ENCODE measurements at regions of chr12 and their contacts with region 1.

Region 1: DNA sequence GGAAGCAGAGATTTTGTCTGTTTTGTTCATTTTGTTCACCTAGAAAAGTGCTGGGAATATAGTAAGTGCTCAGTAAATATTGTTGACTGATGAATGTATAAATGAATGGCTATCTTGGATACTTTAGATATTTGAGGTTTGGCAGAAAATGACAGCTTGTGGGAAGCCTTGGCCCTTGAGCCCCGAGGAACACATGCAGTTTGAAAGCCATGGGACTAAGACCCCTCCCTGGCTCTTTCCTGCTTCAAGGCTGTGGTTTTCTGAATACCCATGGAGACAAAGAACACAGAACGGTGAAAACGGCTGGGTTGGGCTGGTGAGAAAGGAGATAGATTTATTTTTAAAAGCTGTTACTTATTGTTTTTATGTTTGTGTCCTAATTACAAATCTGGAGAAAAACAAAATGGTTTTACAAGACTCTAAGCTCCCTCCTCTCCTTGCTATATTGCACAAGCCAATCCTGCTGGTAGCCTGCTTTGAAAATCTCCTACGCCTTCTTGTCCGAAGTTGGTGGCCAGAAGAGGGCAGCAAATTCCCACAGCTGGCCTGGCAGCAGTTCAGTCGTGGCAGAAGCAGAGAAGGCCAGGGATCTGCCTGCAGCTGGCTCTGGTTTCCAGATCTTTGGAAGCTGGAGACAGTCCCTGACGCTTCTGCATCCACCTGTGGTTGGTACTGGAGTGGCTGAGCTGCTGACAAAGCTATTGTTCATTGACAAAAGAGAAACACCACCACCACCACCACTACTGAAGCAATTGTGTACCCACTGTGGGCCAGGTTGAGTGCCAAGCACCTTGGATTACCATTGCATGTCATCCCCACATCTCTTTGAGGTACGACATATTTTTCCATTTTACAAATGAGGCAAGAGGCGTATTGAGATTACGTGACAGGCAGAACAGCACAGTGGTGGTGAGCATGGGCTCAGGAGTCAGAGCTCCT is 5.2 kb upstream of the KRT85 start:
- DNase-seq: peak; percentile 76 to 79
- H3K4me3 ChIP-seq: no peak overlapping the region
- H3K27ac ChIP-seq: peak overlapping the region; percentile 39 to 50
- H3K4me1 ChIP-seq: no peaks in the 10 kb centered on the region
- H3K27me3 ChIP-seq: no peaks in the 10 kb centered on the region
- CTCF ChIP-seq: peak; percentile 61 to 80 (median 74)
- POLR2A ChIP-seq: no peak

Region 2: DNA sequence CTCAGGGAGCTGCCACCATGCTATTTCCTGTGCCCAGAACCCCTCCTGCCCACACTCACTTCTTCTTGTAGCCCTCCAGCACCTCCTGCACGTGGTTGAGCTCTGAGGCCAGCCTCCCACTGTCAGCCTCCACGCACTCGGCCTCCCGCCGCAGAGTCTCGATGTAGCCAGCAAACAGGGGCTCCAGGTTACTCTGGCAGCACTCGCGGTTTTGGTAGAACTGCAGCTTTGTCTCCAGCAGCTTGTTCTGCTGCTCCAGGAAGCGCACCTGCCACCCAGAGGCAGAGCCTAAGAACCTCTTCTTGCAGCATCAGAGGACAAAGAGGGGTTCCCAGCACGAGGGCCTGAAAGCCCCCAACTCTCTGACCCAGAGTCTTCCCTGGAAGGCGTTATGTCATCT is 53.4 kb before region 1 on chr12:
- intact Hi-C with region 1: no loop called
- DNase-seq: no peak
- H3K4me3 ChIP-seq: no peak overlapping the region
- H3K27ac ChIP-seq: no peak overlapping the region
- H3K4me1 ChIP-seq: no peaks in the 10 kb centered on the region
- H3K27me3 ChIP-seq: no peaks in the 10 kb centered on the region
- CTCF ChIP-seq: no peak
- POLR2A ChIP-seq: no peak

Region 3: GRCh38 chr12:52423661-52424500 is 51.4 kb after region 1 on chr12:
- intact Hi-C with region 1: no loop called
- DNase-seq: peak in 1 of 2 donors; percentile 49
- H3K4me3 ChIP-seq: no peak overlapping the region
- H3K27ac ChIP-seq: peak overlapping the region; percentile 40 to 75
- H3K4me1 ChIP-seq: peaks cover 0 to 4% of the 10 kb centered on the region in 2 donors
- H3K27me3 ChIP-seq: no peaks in the 10 kb centered on the region
- CTCF ChIP-seq: no peak
- POLR2A ChIP-seq: no peak

Region 4: GRCh38 chr12:52879394-52880351 is 507.2 kb after region 1 on chr12:
- intact Hi-C with region 1: loop called (anchors 5 kb)
- DNase-seq: peak; percentile 73 to 85
- H3K4me3 ChIP-seq: peak overlapping the region in 1 of 2 donors; percentile 14
- H3K27ac ChIP-seq: peak overlapping the region; percentile 26 to 43
- H3K4me1 ChIP-seq: peaks cover 0 to 13% of the 10 kb centered on the region in 2 donors
- H3K27me3 ChIP-seq: no peaks in the 10 kb centered on the region
- CTCF ChIP-seq: peak; percentile 60 to 93 (median 78)
- POLR2A ChIP-seq: no peak

Measured in uterus (tissue), 4 donors.